MCF 10A (cell line): ENCODE measurements at regions of chr1 and their contacts with region 1.

Region 1: DNA sequence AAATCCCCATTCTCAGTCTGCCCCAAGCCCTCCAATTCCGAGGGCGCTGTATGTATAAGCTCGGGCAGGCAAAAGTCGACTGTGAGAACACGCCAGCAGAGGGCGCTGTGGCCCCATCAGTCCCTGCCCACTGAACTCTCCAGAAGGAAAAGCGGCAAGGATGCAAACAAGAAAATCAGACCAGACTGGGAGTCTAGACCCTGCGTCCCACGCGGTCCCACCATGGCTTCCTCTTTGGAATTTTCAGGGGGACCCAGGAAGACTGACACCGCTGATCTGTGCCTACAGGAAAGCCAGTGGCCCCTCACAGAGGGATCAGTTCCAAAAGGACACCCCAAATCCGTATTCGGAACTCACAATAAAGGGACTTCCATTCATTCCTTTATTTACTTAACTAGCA is 19.5 kb downstream of the TEX35 start:
- DNase-seq: peak; percentile 88
- H3K4me3 Mint-ChIP-seq: no peak overlapping the region
- H3K27ac Mint-ChIP-seq: no peak overlapping the region
- H3K4me1 Mint-ChIP-seq: peaks cover 36% of the 10 kb centered on the region
- H3K27me3 Mint-ChIP-seq: peaks cover 7% of the 10 kb centered on the region
- CTCF ChIP-seq: peak; percentile 99

Region 2: GRCh38 chr1:178310685-178311105 is 221.7 kb before region 1 on chr1:
- CTCF ChIA-PET with region 1: interaction called, 135 read pairs
- POLR2A ChIA-PET with region 1: interaction called, 7 read pairs
- intact Hi-C with region 1: loop called (anchors 2 kb)
- DNase-seq: peak; percentile 84
- H3K4me3 Mint-ChIP-seq: no peak overlapping the region
- H3K27ac Mint-ChIP-seq: peak overlapping the region; percentile 77
- H3K4me1 Mint-ChIP-seq: peaks cover 15% of the 10 kb centered on the region
- H3K27me3 Mint-ChIP-seq: no peaks in the 10 kb centered on the region
- CTCF ChIP-seq: peak; percentile 82

Region 3: DNA sequence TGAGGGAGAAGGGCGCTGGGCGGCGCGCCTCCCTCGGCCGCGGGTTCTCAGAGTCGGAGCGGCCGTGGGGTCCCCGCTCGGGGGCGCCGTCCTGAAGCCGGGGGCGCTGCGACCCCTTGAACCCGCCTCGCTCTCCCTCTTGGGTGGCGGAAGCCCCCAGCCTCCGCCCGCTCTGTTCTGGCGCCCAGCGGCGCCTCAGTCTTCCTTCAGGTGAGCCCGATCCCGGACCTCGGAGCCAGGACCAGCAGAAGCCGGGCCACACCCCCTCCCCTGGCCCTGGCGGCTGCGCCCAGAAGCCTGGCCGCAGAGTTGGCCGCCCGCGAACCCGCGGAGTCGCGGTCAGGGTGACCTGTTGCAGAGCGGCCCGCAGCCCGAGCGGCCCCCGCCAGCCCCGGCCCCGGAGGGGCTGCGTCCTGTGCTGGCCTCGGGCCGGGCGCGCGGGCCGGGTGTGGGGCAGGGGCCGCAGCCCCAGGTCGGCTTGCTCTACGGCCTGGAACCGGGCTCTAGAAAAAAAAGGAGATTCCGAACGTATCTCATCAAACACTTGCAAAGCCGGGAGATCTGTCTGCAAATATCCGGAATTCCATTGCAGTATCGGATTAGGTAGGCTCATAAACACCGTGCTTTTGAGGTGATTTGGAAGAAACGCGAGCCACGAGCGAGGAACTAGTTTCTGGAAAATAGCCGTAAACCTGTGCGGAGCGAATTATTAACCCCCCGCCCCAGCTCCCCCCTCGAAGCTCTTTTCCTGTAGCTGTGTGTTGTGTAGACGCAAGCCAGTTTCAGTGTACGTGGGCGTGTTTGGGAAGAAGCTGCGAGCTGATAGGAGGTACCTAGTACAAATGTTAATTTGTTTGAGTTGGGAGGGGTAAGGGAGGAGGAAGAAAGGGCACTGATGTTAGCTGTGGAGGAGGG is 193.5 kb after region 1 on chr1:
- CTCF ChIA-PET with region 1: interaction called, 11 read pairs
- POLR2A ChIA-PET with region 1: interaction called, 38 read pairs
- intact Hi-C with region 1: no loop called
- DNase-seq: peak; percentile 98
- H3K4me3 Mint-ChIP-seq: peak overlapping the region; percentile 79
- H3K27ac Mint-ChIP-seq: peak overlapping the region; percentile 91
- H3K4me1 Mint-ChIP-seq: peaks cover 25% of the 10 kb centered on the region
- H3K27me3 Mint-ChIP-seq: no peaks in the 10 kb centered on the region
- CTCF ChIP-seq: peak; percentile 6

Region 4: GRCh38 chr1:178774263-178774662 is 241.9 kb after region 1 on chr1:
- CTCF ChIA-PET with region 1: interaction called, 17 read pairs
- POLR2A ChIA-PET with region 1: no interaction called
- intact Hi-C with region 1: no loop called
- DNase-seq: peak; percentile 54
- H3K4me3 Mint-ChIP-seq: no peak overlapping the region
- H3K27ac Mint-ChIP-seq: no peak overlapping the region
- H3K4me1 Mint-ChIP-seq: no peaks in the 10 kb centered on the region
- H3K27me3 Mint-ChIP-seq: no peaks in the 10 kb centered on the region
- CTCF ChIP-seq: peak; percentile 55

Region 5: DNA sequence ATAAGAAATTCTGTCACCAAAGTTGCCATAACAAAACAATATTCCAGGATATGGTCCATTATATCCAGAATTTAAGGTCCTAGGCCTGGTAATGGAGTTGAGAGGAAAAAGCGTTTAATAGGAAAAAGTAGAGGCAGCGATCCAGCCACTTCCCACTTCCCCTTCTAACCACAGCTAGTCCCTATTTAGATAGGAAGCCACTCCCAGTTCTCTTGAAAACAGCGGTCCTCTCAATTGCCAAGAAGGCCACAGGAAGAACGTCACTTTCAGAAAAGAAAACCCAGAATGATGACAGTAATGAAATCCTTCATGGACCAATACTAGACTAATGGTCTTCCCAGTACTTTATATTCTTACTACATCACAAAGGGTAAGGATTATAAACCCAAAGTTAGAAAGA is 658.5 kb after region 1 on chr1:
- CTCF ChIA-PET with region 1: interaction called, 4 read pairs
- POLR2A ChIA-PET with region 1: no interaction called
- intact Hi-C with region 1: loop called (anchors 5 kb)
- DNase-seq: no peak
- H3K4me3 Mint-ChIP-seq: no peak overlapping the region
- H3K27ac Mint-ChIP-seq: no peak overlapping the region
- H3K4me1 Mint-ChIP-seq: peaks cover 12% of the 10 kb centered on the region
- H3K27me3 Mint-ChIP-seq: no peaks in the 10 kb centered on the region
- CTCF ChIP-seq: no peak

Region 6: GRCh38 chr1:179599623-179600249 is 1067.3 kb after region 1 on chr1:
- CTCF ChIA-PET with region 1: no interaction called
- POLR2A ChIA-PET with region 1: no interaction called
- intact Hi-C with region 1: loop called (anchors 5 kb)
- DNase-seq: peak; percentile 73
- H3K4me3 Mint-ChIP-seq: no peak overlapping the region
- H3K27ac Mint-ChIP-seq: no peak overlapping the region
- H3K4me1 Mint-ChIP-seq: no peaks in the 10 kb centered on the region
- H3K27me3 Mint-ChIP-seq: peaks cover 69% of the 10 kb centered on the region
- CTCF ChIP-seq: peak; percentile 52